ENCODE measurements at regions of chr2 and their contacts with region 1.

Region 1: DNA sequence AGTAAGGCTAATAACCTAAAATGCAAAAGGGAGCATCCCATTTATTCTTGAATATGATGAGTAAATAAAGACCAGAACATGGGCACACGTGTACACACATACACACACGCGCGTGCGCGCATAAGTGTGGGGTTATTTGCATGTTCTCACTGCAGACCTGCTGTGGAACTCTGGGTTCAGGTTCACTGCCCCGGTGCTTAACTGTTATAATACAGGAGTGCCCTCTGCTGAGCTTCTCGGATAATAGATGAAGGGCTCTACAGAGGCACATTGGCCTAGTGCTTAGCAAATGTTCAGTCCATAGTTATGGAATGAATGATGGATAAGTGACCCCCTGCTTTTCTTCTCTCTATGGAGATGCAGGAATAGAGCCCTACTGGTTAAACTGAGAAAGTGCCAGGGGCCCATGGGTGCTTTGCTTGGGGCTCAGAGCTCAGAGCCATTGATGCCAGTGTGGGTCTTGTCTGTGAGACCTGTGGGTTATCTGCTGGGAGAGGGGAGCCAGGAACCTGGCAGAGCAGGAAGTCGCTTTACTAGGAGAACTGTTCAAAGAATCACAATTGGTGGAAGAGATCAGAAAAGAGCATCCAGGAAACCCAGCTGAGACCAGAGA is 3.6 kb upstream of the ARL4C start:
- DNase-seq: peak in 1 of 2 donors; percentile 68
- H3K4me3 ChIP-seq: no peak overlapping the region
- CTCF ChIP-seq: no peak
- POLR2A ChIP-seq: no peak

Region 2: DNA sequence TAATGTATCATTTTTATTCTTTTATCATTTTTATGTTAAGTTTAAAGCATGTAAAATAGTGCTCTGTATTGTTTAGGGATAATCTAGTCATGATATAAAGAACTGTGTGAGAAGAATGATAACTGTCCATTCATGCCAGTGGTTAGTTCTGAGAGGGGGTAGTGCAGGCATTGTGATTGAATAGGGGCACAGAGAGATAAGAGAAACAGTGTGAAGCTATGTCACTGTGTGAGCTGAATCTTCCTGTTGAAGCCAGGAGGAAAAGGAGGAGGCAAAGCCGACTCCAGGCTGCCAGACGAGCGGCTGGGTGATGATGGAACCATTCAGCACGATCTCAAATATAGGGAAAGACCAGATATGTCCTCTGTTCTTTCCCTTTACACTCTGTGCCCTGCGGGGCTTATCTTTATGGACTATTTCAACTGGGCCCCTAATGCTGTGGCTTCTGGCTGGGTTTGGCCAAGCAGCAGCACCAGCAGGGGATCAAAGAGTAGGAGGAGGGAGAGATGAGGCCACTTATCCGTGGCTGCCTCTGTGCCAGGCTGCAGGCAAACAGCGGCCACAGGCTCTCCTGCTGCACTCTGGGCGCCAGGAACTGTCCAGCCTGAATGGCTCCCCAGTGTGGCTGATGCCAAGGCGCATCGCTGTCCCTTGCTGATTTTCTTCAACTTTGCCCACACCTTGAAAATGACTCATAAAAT is 322.0 kb before region 1 on chr2:
- intact Hi-C with region 1: no loop called
- DNase-seq: no peak
- H3K4me3 ChIP-seq: no peak overlapping the region
- CTCF ChIP-seq: no peak
- POLR2A ChIP-seq: no peak

Region 3: GRCh38 chr2:234288974-234289455 is 211.5 kb before region 1 on chr2:
- intact Hi-C with region 1: loop called (anchors 5 kb)
- DNase-seq: peak; percentile 77 to 95
- H3K4me3 ChIP-seq: no peak overlapping the region
- CTCF ChIP-seq: peak in 1 of 3 donors; percentile 60
- POLR2A ChIP-seq: no peak